Breast epithelium (tissue), 4 donors: ENCODE measurements at regions of chr2 and their contacts with region 1.

Region 1: DNA sequence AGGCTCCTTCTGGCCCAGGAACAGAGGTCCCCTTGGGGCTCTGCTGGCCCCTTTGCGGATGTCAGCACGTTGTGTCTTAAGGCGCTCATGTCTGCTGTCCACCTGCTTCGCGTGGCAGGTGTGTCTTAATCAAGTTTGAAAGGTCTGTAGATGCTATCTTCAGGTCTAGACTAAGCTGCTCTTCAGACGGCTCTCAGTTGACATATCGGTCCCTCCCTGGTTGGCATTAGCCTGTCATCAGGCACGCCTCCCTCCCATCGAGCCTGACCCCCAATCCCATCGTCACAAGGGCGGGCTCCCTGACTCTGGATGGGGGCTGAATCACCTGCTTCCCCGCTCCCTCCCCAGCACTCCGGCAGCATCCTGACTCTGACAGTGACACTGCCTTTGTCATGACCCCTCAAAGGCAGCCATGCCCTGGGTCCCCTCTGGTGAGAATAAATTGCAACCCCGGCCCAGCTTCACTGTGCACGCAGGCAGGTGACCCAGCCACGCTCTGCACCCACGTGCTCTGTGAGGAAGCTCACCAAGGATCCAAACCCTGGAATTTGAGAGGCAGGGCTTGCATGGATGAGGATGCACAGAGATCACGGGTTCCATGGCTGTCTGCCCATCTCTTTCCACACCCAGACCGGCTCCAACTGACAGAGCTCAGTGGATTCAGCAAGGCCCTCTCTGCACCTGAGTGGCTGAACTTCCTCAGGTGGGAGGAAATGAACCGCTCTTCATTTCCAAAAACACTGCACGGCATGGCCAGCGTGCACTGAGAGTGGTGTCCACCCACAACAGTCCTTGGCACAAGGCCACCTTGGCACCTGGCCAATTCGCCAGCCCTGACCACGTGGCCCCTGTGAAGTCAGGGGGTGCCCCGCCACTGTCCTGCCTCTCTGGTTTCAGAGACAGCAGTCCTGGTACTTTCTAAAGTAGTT is 110.2 kb upstream of the GPC1 start:
- DNase-seq: no peak
- H3K4me3 ChIP-seq: no peak overlapping the region
- H3K27ac ChIP-seq: no peak overlapping the region
- H3K4me1 ChIP-seq: no peaks in the 10 kb centered on the region
- H3K27me3 ChIP-seq: peaks cover 0 to 12% of the 10 kb centered on the region in 2 donors
- CTCF ChIP-seq: no peak
- POLR2A ChIP-seq: no peak

Region 2: GRCh38 chr2:240213476-240214421 is 111.5 kb before region 1 on chr2:
- intact Hi-C with region 1: loop called (anchors 5 kb)
- DNase-seq: peak in 1 of 2 donors; percentile 45
- H3K4me3 ChIP-seq: no peak overlapping the region
- H3K27ac ChIP-seq: no peak overlapping the region
- H3K4me1 ChIP-seq: no peaks in the 10 kb centered on the region
- H3K27me3 ChIP-seq: no peaks in the 10 kb centered on the region
- CTCF ChIP-seq: no peak
- POLR2A ChIP-seq: no peak

Region 3: DNA sequence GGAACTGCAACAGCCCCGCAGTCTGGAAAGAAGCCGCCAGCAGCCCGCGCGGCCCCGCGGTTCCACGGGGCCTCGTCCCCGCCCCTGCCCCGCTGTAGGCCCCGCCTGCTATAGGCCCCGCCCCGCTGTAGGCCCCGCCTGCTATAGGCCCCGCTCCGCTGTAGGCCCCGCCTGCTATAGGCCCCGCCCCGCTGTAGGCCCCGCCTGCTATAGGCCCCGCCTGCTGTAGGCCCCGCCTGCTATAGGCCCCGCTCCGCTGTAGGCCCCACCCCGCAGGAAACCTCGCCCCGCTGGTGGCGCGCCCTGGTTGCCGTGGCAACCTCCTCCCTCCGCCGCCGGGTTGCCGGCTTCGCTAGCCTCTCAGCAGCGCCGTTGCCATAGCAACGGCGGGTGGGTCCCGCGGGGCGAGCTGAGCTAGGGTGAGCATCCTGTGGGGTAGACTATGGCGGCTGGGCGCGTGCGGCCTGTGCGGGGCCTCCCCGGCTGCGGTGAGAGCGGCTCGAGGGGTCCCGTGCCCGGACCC is 507.0 kb after region 1 on chr2:
- intact Hi-C with region 1: no loop called
- DNase-seq: peak; percentile 68 to 81
- H3K4me3 ChIP-seq: peak overlapping the region in 2 of 3 donors; percentile 38 to 47
- H3K27ac ChIP-seq: peak overlapping the region in 1 of 2 donors; percentile 25
- H3K4me1 ChIP-seq: peaks cover 0 to 8% of the 10 kb centered on the region in 2 donors
- H3K27me3 ChIP-seq: peaks cover 2 to 18% of the 10 kb centered on the region in 2 donors
- CTCF ChIP-seq: no peak
- POLR2A ChIP-seq: no peak